ENCODE measurements at regions of chr18 and their contacts with region 1.

Region 1: DNA sequence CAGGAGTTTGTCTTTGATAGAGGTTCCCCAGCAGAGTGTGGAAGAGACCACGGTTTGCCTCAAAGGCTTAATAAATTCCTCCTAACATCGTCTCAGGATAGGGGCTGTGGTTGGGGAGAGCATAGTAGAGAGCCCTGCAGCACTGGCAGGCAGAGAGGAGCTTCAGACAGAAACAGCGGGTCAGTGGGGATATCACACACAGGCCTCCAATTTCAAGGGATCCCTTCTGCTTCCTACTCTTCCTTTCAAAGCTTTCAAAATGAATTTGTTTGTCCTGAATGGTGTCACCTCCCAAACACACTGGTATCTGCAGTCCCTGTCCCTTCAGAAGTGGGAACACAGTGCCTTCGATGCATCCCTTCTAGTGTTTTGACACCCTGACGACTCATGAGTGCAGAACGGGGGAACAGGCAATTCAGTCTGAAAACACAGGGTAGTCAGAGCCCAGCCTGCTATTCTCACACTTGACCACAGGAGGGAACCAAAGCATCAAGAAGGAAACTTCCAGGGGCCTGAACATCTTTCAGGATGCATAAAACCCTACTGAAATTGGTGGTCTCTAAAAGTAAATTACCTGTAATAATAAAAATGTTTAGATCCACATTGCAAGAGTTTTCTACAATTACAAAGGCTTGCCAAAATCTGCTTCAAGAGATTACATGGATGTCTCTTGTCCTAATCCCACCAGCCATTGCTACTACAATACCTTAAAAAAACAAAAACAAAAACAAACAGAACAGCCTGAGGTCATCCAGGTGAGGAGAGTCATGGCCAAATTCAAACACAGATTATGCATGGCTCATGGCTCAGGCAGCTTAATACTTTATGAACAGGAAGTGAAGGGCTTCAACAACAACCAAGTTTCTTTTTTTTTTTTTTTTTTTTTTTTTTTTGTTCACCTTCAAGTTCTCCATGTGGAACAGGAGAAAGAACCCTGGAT is 49.8 kb downstream of the SLC14A2 start:
- DNase-seq: peak; percentile 74
- H3K4me3 Mint-ChIP-seq: no peak overlapping the region
- H3K27ac Mint-ChIP-seq: no peak overlapping the region
- H3K4me1 Mint-ChIP-seq: peaks cover 11% of the 10 kb centered on the region
- H3K27me3 Mint-ChIP-seq: no peaks in the 10 kb centered on the region
- CTCF ChIP-seq: peak; percentile 93

Region 2: GRCh38 chr18:45441110-45441842 is 223.8 kb before region 1 on chr18:
- CTCF ChIA-PET with region 1: no interaction called
- POLR2A ChIA-PET with region 1: no interaction called
- intact Hi-C with region 1: no loop called
- DNase-seq: peak; percentile 47
- H3K4me3 Mint-ChIP-seq: no peak overlapping the region
- H3K27ac Mint-ChIP-seq: peak overlapping the region; percentile 5
- H3K4me1 Mint-ChIP-seq: peaks cover 17% of the 10 kb centered on the region
- H3K27me3 Mint-ChIP-seq: no peaks in the 10 kb centered on the region
- CTCF ChIP-seq: peak; percentile 31

Region 3: GRCh38 chr18:45621061-45621511 is 44.0 kb before region 1 on chr18:
- CTCF ChIA-PET with region 1: interaction called, 50 read pairs
- POLR2A ChIA-PET with region 1: interaction called, 6 read pairs
- intact Hi-C with region 1: loop called (anchors 1 kb)
- DNase-seq: peak; percentile 53
- H3K4me3 Mint-ChIP-seq: no peak overlapping the region
- H3K27ac Mint-ChIP-seq: no peak overlapping the region
- H3K4me1 Mint-ChIP-seq: peaks cover 12% of the 10 kb centered on the region
- H3K27me3 Mint-ChIP-seq: peaks cover 15% of the 10 kb centered on the region
- CTCF ChIP-seq: peak; percentile 81

Region 4: DNA sequence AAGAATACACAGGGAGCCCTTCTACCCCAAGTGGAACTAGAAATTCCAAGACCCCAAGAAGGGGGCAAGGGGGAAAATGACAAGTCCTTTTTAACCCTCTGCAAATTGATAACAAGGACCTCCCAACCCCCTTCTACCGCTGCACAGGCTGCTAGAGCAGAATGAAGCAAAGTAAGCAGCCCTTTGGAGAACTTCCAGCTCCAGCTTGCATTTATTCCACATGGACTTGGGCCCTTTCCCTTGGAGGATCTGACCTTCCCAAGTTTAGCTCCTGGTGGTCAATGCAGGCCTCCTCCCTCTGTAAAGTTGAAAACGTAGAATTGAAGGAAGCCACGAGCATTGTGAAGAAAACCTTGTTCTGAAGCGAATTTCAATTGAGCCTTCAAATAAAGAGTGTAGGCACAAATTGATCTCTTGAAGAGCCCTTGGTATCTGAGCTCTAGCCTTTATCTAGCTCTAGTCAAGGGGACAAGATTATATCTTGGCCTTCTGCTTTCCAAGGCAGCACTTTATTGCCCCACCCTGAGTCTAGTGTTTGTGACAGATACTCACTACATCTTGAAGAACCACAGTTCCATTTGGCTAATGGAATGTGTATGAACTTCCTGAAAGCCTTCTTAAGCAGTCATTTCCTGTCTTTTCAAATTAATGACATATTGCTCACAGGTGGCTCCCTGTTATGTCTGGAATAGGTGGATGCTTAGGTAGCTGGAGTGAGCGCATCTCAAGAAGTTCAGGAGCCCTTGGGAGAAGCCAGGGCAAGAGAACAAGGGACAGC is 12.6 kb before region 1 on chr18:
- CTCF ChIA-PET with region 1: interaction called, 32 read pairs
- POLR2A ChIA-PET with region 1: interaction called, 6 read pairs
- intact Hi-C with region 1: no loop called
- DNase-seq: no peak
- H3K4me3 Mint-ChIP-seq: no peak overlapping the region
- H3K27ac Mint-ChIP-seq: no peak overlapping the region
- H3K4me1 Mint-ChIP-seq: peaks cover 9% of the 10 kb centered on the region
- H3K27me3 Mint-ChIP-seq: no peaks in the 10 kb centered on the region
- CTCF ChIP-seq: no peak

Region 5: DNA sequence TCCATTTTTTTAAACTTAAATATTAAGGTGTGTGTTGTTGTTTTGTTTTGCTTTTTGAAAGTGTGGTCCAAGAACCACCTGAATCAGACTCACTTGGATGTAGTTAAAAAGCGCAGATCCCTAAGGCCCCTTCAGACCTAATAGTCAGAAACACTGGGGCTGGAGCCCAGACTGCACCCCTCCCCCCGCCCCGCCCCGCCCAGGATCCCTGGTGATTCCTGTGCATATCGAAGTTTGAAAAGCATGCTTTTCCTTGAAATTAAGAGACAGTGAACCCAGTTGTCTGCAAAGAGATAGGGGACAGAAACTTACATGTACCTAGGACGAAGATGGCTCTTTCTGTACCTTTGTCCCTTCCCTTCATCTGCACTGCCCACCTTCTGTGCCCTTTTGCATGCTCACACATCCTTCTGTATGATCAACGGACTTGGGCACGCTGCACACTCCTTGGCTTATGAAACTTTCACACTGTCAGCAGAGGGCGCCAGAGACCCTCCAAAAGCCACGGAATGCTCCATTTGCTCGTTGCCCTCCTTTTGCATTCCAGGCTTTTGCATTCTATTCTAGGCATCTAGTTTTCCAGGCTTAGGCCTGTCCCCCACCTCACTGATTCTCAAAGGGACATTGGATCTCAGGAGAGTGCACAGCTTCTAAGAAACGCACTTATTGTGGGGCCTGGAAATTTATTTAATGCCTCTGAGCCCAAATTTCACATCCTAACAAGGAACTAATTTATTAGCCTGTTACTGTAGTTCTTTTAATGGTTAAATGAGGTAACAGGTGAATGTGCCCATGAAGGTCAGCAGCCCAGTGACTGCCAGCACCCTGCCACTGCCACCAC is 26.1 kb after region 1 on chr18:
- CTCF ChIA-PET with region 1: interaction called, 10 read pairs
- POLR2A ChIA-PET with region 1: no interaction called
- intact Hi-C with region 1: loop called (anchors 1 kb)
- DNase-seq: peak; percentile 86
- H3K4me3 Mint-ChIP-seq: no peak overlapping the region
- H3K27ac Mint-ChIP-seq: no peak overlapping the region
- H3K4me1 Mint-ChIP-seq: peaks cover 10% of the 10 kb centered on the region
- H3K27me3 Mint-ChIP-seq: peaks cover 11% of the 10 kb centered on the region
- CTCF ChIP-seq: peak; percentile 90

Region 6: GRCh38 chr18:45910405-45911023 is 245.4 kb after region 1 on chr18:
- CTCF ChIA-PET with region 1: interaction called, 12 read pairs
- POLR2A ChIA-PET with region 1: interaction called, 4 read pairs
- intact Hi-C with region 1: loop called (anchors 1 kb)
- DNase-seq: peak; percentile 61
- H3K4me3 Mint-ChIP-seq: no peak overlapping the region
- H3K27ac Mint-ChIP-seq: no peak overlapping the region
- H3K4me1 Mint-ChIP-seq: no peaks in the 10 kb centered on the region
- H3K27me3 Mint-ChIP-seq: no peaks in the 10 kb centered on the region
- CTCF ChIP-seq: peak; percentile 74